Uterus (tissue), 4 donors: ENCODE measurements at regions of chr14 and their contacts with region 1.

Region 1: DNA sequence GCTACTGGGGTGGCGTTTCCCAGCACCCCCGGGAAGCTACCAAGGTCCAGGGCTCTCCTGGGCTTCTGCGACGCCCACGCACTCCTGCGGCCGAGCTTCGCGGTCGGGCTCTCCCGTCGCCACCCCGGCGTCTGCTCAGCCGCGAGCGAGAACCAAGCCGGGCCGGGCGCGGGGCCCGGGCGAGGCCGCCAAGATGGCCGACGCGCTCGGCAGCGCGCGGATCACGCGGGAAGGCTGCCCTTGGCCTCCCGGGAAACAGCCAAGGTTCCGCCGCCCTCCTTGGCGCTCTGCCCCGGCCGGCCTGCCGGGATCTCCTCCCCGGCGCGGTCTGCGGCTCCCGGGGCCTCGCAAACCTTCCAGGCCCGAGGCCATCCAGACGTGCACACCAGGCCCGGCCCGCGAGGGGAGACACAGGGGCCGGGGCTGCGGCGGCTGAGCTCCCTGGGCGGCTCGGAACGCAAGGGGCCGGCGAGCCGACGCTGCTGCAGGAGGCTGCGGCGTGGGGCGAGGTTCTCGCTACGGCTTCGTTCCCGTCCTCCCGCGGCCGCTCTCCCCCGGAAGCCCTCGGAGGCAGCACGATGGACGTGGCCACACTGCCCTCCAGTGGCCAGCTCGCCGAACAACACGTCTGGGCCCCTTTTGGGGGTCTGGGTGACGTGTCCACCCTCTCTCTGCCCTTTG is 23.5 kb upstream of the ZFP36L1 start:
- DNase-seq: peak; percentile 89 to 90
- H3K4me3 ChIP-seq: peak overlapping the region; percentile 25 to 43
- H3K27ac ChIP-seq: peak overlapping the region; percentile 99
- H3K4me1 ChIP-seq: peaks cover 15 to 29% of the 10 kb centered on the region in 2 donors
- H3K27me3 ChIP-seq: no peaks in the 10 kb centered on the region
- CTCF ChIP-seq: peak; percentile 93 to 99 (median 96)
- POLR2A ChIP-seq: peak; percentile 36 to 65

Region 2: DNA sequence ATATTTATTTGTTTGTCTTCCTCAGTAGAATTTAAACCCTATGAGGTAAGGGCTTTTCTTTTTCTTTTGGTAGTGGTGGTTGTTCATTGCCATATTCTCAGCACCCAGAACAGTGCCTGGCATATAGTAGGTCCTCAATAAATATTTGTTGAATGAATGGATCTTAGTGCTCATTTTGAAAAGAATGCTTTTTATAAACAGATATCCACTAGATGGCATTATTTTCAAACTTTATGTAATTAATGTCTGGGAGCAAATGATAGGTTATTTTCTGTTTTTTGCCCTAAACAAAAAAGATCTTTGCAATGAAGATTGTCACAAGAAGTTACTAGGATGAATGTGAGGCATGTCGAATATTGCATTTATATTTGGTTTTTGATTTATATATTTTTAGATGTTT is 932.7 kb before region 1 on chr14:
- intact Hi-C with region 1: loop called (anchors 5 kb)
- DNase-seq: no peak
- H3K4me3 ChIP-seq: no peak overlapping the region
- H3K27ac ChIP-seq: peak overlapping the region; percentile 76 to 86
- H3K4me1 ChIP-seq: peaks cover 0 to 8% of the 10 kb centered on the region in 2 donors
- H3K27me3 ChIP-seq: no peaks in the 10 kb centered on the region
- CTCF ChIP-seq: peak; percentile 41 to 54 (median 45)
- POLR2A ChIP-seq: no peak

Region 3: GRCh38 chr14:67934008-67934481 is 882.4 kb before region 1 on chr14:
- intact Hi-C with region 1: loop called (anchors 5 kb)
- DNase-seq: peak; percentile 33 to 63
- H3K4me3 ChIP-seq: no peak overlapping the region
- H3K27ac ChIP-seq: peak overlapping the region; percentile 77 to 93
- H3K4me1 ChIP-seq: peaks cover 0 to 12% of the 10 kb centered on the region in 2 donors
- H3K27me3 ChIP-seq: no peaks in the 10 kb centered on the region
- CTCF ChIP-seq: peak; percentile 74 to 92 (median 78)
- POLR2A ChIP-seq: peak in 1 of 2 donors; percentile 10

Region 4: DNA sequence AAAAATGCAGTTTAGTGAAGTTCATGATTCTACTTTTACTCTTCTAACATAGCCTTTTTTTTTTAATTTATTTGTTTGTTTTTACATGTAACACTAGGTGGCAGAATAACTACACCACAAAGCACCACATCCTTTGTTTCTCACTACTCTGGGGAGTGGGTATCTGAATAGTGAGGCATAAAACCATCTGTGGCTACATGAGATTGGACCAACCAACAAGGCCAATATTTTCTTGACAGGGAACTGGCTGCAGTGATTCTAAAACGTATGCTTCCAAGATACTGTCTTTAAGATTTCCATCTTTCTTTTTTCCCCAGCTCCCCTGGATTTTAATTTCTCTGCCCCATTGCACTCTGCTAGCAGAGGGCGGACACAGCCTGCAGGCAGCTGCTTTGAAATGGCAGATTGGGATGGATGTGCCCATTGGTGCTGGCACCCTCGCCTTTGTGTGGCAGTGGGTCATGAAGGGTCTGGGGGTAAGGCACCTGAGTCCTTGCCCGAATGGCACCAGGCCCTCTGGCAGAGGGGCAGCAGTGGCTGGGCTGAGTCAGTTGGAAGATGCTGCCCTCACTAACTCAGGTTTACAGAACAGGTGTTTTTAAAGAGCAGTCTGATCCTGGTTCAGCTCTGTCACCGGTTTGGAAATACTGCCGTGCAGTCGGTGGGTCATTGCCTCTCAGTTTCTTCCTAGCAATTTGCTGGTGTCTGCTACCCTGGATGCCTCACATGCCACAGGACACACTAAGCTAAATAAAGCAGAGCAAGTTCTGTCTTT is 567.7 kb before region 1 on chr14:
- intact Hi-C with region 1: loop called (anchors 10 kb)
- DNase-seq: peak in 1 of 2 donors; percentile 46
- H3K4me3 ChIP-seq: no peak overlapping the region
- H3K27ac ChIP-seq: peak overlapping the region; percentile 90 to 94
- H3K4me1 ChIP-seq: peaks cover 36 to 43% of the 10 kb centered on the region in 2 donors
- H3K27me3 ChIP-seq: no peaks in the 10 kb centered on the region
- CTCF ChIP-seq: peak; percentile 59 to 76 (median 68)
- POLR2A ChIP-seq: no peak

Region 5: DNA sequence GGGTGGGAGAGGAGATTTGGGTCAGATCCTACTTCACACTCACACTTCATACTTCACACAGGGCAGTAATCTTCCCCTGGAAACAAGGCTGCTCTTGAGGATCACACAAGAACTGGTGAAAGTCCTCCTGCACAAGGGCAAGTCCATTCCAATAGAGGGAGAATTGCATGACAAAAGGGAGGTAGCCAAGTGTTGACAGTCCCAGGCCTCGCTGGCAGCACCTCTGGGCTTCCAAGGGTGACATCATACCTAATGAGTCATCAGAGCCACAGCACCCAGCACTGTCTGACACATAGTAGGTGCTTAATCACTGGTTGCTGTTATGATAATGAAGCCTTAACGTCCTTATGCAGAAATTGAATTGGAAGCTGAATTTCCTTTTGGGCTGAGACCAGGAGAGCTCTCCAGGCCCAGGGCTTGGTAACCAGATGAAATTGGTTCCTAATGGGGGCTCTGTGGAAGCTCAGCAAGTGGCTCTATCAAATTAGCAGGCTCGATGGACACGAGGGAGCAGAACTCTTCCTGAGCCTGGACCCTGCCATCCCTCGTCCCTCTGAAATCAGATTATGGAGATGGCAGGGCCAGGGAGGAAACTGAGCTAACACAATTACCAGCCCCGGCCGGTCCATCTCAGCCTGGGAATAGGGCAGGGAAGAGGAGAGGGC is 221.5 kb after region 1 on chr14:
- intact Hi-C with region 1: no loop called
- DNase-seq: no peak
- H3K4me3 ChIP-seq: no peak overlapping the region
- H3K27ac ChIP-seq: peak overlapping the region; percentile 43 to 73
- H3K4me1 ChIP-seq: peaks cover 0 to 11% of the 10 kb centered on the region in 2 donors
- H3K27me3 ChIP-seq: no peaks in the 10 kb centered on the region
- CTCF ChIP-seq: no peak
- POLR2A ChIP-seq: no peak